WTC11 (cell line): ENCODE measurements at regions of chr4 and their contacts with region 1.

Region 1: DNA sequence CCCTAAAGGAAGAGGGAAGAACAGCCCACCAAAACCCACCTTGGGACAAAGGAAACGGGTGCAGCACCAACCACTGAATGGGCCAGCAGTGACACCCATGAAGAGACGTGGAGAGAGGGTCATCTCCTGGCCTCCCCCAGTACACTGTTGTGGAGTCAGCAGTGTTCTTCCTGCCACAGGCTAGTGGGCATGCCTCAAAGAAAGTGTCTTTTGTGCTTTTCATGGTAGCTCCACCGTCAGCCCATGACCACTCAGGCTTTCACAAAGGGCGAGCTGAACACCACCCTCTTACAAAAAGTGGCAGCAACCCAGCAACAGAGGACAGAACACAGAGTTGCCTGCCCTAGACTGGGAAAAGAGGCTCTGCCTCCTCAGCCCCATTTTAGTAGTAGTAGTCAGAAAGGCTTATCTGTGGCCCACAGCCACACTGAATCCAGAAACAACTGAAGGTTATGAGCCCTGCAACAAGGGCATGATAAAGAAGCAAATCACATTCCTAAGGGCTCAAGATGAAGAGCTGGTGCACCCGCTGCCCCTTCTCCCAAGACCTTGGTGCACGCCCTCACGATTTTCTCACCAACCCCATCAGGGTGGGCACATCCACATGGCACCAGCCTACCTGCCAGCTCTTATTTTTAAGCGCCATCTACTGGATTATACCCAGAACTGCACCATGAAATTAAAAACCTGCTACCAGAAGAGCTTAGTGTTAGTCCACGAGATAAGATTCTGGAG is 53.1 kb downstream of the RAB28 start:
- DNase-seq: no peak
- ATAC-seq: peak; percentile 89
- H3K4me3 Mint-ChIP-seq: no peak overlapping the region
- H3K27ac Mint-ChIP-seq: peak overlapping the region; percentile 53; the same call in 1 of the 2 replicates
- H3K4me1 Mint-ChIP-seq: peaks cover 39% of the 10 kb centered on the region
- H3K27me3 Mint-ChIP-seq: no peaks in the 10 kb centered on the region
- CTCF ChIP-seq: peak; percentile 73

Region 2: GRCh38 chr4:12852338-12853307 is 578.4 kb before region 1 on chr4:
- CTCF ChIA-PET with region 1: interaction called, 16 read pairs
- POLR2A ChIA-PET with region 1: no interaction called
- DNase-seq: no peak
- ATAC-seq: peak; percentile 98
- H3K4me3 Mint-ChIP-seq: no peak overlapping the region
- H3K27ac Mint-ChIP-seq: no peak overlapping the region
- H3K4me1 Mint-ChIP-seq: peaks cover 6% of the 10 kb centered on the region
- H3K27me3 Mint-ChIP-seq: no peaks in the 10 kb centered on the region
- CTCF ChIP-seq: peak; percentile 31; the same call in 1 of the 2 replicates

Region 3: DNA sequence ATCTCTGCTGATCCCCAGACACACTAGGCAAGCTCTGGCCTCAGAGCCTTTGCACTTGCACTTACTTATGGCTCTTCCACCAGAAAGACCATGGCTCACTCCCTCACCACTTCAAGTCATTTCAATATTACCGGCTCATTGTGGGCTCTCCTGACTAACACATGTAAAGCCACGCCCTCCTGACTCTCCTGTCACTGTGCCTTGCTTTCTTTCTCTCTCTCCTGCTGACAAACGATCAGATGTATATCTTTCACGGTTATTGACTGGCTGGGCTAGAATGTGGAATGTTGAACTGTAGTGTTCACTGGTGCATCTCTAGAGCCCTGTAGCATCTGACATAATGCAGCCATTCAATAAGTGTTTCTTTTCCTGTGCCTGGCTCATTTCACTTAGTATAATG is 372.0 kb before region 1 on chr4:
- CTCF ChIA-PET with region 1: no interaction called
- POLR2A ChIA-PET with region 1: no interaction called
- DNase-seq: no peak
- ATAC-seq: no peak
- H3K4me3 Mint-ChIP-seq: no peak overlapping the region
- H3K27ac Mint-ChIP-seq: no peak overlapping the region
- H3K4me1 Mint-ChIP-seq: peaks cover 7% of the 10 kb centered on the region
- H3K27me3 Mint-ChIP-seq: no peaks in the 10 kb centered on the region
- CTCF ChIP-seq: no peak

Region 4: DNA sequence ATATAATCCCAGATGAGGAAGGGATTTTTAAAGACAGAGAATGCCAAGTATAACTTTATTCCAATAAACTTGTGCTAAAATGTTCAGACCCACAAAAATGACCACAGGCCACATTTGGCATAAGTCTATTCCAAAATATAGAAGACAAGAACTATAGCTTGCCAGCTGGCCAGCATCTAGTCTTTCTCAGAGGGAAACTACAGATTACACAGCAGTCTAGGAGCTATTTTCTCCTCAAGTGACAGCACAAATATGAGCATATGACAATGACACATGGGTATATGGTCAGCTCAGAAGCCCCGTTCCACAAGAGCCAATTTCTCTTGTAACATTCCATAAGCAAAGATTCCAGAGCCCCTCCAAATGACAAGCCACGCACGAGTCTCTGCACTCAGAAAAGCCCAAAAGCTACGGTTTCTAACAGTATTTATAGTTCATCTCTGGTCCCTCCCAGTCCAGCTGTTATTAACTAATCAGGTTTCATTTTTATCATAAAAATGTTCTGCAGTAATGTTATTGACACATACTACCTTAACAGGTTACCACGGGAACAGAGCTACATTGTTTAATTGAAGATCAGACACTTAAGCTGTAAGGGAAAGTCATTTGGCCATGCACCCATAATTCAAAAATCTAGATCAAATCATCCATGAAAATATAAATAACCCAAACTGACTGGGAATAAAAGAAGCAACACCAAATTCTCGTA is 17.1 kb before region 1 on chr4:
- CTCF ChIA-PET with region 1: interaction called, 13 read pairs
- POLR2A ChIA-PET with region 1: interaction called, 4 read pairs
- DNase-seq: no peak
- ATAC-seq: no peak
- H3K4me3 Mint-ChIP-seq: no peak overlapping the region
- H3K27ac Mint-ChIP-seq: no peak overlapping the region
- H3K4me1 Mint-ChIP-seq: peaks cover 21% of the 10 kb centered on the region
- H3K27me3 Mint-ChIP-seq: no peaks in the 10 kb centered on the region
- CTCF ChIP-seq: no peak

Region 5: DNA sequence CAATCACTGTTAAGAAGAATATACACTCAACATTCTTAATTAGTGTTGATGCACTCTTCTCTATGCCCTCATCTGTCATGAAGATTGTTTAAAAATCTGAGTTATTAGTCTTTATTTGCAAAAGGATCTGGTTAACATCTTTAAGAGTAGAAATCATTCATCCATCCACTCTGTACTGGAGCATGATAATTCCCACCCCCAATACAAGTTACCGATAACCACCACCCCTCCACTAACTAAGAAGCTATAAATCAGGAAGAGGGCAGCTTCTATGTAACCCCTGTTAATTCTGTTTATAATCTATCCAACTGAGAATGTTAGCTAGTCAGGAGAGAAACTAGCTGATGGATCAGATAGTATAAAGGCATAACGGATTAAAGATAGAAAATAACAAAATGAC is 18.6 kb after region 1 on chr4:
- CTCF ChIA-PET with region 1: interaction called, 11 read pairs
- POLR2A ChIA-PET with region 1: no interaction called
- DNase-seq: no peak
- ATAC-seq: no peak
- H3K4me3 Mint-ChIP-seq: no peak overlapping the region
- H3K27ac Mint-ChIP-seq: no peak overlapping the region
- H3K4me1 Mint-ChIP-seq: peaks cover 29% of the 10 kb centered on the region
- H3K27me3 Mint-ChIP-seq: no peaks in the 10 kb centered on the region
- CTCF ChIP-seq: no peak

Region 6: GRCh38 chr4:13484122-13484748 is 53.2 kb after region 1 on chr4 and contains the start of gene RAB28:
- CTCF ChIA-PET with region 1: interaction called, 10 read pairs
- POLR2A ChIA-PET with region 1: no interaction called
- DNase-seq: peak; percentile 91
- ATAC-seq: peak; percentile 92
- H3K4me3 Mint-ChIP-seq: peak within 1 kb of the TSS; percentile 91
- H3K27ac Mint-ChIP-seq: peak within 1 kb of the TSS; percentile 99
- H3K4me1 Mint-ChIP-seq: peaks cover 20% of the 10 kb centered on the region
- H3K27me3 Mint-ChIP-seq: peaks cover 16% of the 10 kb centered on the region
- CTCF ChIP-seq: no peak
- total RNA-seq, gene RAB28: 17.1 to 18.4 TPM (median 17.4 TPM) in 3 replicates

Region 7: DNA sequence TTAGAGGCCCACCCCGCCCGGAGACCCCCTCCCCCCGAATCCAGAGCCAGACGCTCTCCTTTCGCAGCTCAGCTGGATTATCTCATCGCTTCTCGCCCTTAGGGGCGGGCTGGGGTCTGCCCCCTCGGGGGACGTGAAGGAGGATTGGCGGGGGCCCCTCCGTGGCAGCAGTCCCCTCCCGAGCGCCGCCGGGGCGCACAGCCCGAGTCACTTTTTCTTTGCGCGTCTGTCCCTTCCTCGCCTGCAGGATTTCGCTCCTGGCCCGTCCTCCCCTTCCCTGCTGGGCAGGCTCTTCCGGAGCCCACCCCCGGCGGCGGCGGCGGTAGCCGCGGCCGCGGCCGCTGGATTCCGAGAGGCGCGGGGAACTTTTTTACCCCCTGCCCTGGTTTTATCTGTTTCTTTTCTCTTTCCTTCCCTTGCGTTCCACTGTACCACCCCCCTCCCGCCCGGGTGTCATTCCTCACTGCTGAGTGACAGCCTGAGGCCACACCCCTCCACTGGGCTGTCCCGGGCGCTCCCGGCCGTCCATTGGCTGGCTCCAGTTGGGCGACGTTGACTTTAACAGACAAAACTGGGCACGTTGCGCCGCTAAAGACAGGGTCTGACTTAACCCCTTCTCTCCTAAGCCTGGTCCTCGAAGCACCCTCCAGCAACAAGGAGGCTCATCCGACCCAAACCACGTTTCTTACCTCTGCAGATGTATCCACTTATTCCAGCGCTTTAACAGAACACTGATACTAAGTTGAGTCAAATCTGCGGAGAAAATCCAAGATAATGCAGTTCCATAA is 113.8 kb after region 1 on chr4:
- CTCF ChIA-PET with region 1: interaction called, 19 read pairs
- POLR2A ChIA-PET with region 1: no interaction called
- DNase-seq: peak; percentile 95
- ATAC-seq: peak; percentile 69
- H3K4me3 Mint-ChIP-seq: peak overlapping the region; percentile 83
- H3K27ac Mint-ChIP-seq: no peak overlapping the region
- H3K4me1 Mint-ChIP-seq: peaks cover 52% of the 10 kb centered on the region
- H3K27me3 Mint-ChIP-seq: peaks cover 97% of the 10 kb centered on the region
- CTCF ChIP-seq: no peak

Region 8: DNA sequence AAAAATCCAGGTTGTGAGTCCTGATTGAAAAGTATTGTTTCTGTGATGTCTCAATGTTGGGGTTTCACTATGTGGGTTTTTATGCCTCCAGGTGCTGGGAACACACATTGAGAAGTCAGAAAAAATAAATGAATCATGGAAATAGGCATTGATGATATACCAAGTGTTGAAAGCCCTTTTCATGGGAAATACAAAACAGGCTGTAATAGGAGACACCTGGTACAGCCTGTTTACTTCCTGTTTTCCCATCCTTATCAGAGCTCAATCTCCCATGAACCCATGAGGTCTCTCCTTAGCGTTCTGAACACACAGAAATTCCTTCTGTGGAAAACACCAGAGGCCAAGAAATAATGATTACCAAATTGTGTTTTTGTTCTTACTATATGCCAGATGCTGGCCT is 302.8 kb after region 1 on chr4:
- CTCF ChIA-PET with region 1: no interaction called
- POLR2A ChIA-PET with region 1: no interaction called
- DNase-seq: no peak
- ATAC-seq: no peak
- H3K4me3 Mint-ChIP-seq: no peak overlapping the region
- H3K27ac Mint-ChIP-seq: no peak overlapping the region
- H3K4me1 Mint-ChIP-seq: no peaks in the 10 kb centered on the region
- H3K27me3 Mint-ChIP-seq: no peaks in the 10 kb centered on the region
- CTCF ChIP-seq: no peak